T-cell (primary cell): ENCODE measurements at regions of chr5 and their contacts with region 1.

Region 1: DNA sequence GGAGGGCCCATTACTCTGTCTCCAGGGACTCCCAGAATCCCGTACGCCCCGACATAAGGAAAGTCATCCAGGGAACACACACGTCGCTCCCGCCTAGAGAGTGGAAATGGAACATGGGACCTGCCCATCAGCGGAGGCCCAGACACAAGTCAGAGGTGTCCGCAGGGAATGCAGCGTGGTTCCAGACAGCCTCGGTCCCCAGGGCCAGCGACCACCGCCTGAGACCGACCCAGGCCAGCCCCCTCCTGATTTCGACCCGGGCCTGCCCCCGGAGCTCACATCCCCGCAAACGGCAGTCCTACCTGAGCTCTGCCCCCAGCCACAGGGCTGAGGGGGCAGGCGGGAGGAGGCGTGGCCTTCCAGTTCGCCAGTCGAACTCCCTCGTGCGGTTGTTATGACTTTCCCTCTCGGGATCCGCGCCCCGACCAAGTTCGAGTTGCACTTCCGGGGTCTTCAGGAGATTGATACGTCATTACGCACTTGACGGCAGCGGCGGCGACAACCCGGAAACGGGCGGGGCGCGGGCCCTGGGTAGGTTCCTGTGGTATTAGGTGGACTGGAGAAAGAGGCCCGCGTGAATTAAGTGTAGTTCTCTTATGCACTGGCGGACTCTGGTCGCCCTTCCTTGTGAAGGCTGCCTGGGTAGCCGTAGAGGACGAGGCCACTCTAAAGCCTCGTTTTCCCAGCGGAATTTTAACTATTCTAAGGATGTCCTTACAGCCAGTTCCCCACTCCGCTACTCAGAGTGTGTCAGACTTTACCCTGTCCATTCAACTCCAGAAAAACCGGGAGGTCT is 370.0 kb upstream of the POU5F2 start:
- DNase-seq: peak; percentile 80 to 94 (median 91)
- ATAC-seq: peak; percentile 94 to 98 (median 97)
- H3K4me3 ChIP-seq: peak overlapping the region; percentile 67 to 95
- H3K4me3 Mint-ChIP-seq: peak overlapping the region; percentile 91 to 96 (median 93)
- H3K27ac ChIP-seq: peak overlapping the region; percentile 70
- H3K27ac Mint-ChIP-seq: peak overlapping the region; percentile 91 to 93
- H3K4me1 ChIP-seq: peaks cover 8 to 14% of the 10 kb centered on the region in 2 experiments
- H3K4me1 Mint-ChIP-seq: peaks cover 45 to 49% (median 49%) of the 10 kb centered on the region in 3 donors
- H3K27me3 ChIP-seq: peaks cover 0 to 2% of the 10 kb centered on the region in 2 experiments
- H3K27me3 Mint-ChIP-seq: peaks cover 0 to 7% of the 10 kb centered on the region in 2 donors

Region 2: GRCh38 chr5:92421937-92422336 is 1689.5 kb before region 1 on chr5:
- CTCF ChIA-PET with region 1: no interaction called
- POLR2A ChIA-PET with region 1: no interaction called
- DNase-seq: no peak
- ATAC-seq: no peak
- H3K4me3 ChIP-seq: no peak overlapping the region
- H3K4me3 Mint-ChIP-seq: no peak overlapping the region
- H3K27ac ChIP-seq: no peak overlapping the region
- H3K27ac Mint-ChIP-seq: no peak overlapping the region
- H3K4me1 ChIP-seq: no peaks in the 10 kb centered on the region
- H3K4me1 Mint-ChIP-seq: no peaks in the 10 kb centered on the region
- H3K27me3 ChIP-seq: no peaks in the 10 kb centered on the region
- H3K27me3 Mint-ChIP-seq: no peaks in the 10 kb centered on the region

Region 3: DNA sequence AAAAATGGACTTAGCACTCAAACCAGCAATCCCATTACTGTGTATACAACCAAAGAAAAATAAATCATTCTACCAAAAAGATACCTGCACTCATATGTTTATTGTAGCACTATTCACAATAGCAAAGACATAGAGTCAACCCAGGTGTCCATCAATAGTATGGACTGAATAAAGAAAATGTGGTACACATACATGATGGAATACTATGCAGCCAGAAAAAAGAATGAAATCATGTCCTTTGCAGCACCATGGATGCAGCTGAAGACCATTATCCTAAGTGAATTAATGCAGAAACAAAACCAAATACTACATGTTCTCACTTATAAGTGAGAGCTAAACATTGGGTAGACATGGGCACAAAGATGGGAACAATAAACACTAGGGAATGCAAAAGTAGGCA is 133.2 kb before region 1 on chr5:
- CTCF ChIA-PET with region 1: no interaction called
- POLR2A ChIA-PET with region 1: interaction called in 1 of 2 experiments, 13 read pairs
- DNase-seq: no peak
- ATAC-seq: no peak
- H3K4me3 ChIP-seq: no peak overlapping the region
- H3K4me3 Mint-ChIP-seq: no peak overlapping the region
- H3K27ac ChIP-seq: no peak overlapping the region
- H3K27ac Mint-ChIP-seq: no peak overlapping the region
- H3K4me1 ChIP-seq: no peaks in the 10 kb centered on the region
- H3K4me1 Mint-ChIP-seq: peaks cover 2 to 10% (median 6%) of the 10 kb centered on the region in 3 donors
- H3K27me3 ChIP-seq: no peaks in the 10 kb centered on the region
- H3K27me3 Mint-ChIP-seq: no peaks in the 10 kb centered on the region

Region 4: GRCh38 chr5:94157704-94158539 is 46.5 kb after region 1 on chr5:
- CTCF ChIA-PET with region 1: no interaction called
- POLR2A ChIA-PET with region 1: no interaction called
- DNase-seq: no peak
- ATAC-seq: no peak
- H3K4me3 ChIP-seq: no peak overlapping the region
- H3K4me3 Mint-ChIP-seq: no peak overlapping the region
- H3K27ac ChIP-seq: no peak overlapping the region
- H3K27ac Mint-ChIP-seq: no peak overlapping the region
- H3K4me1 ChIP-seq: no peaks in the 10 kb centered on the region
- H3K4me1 Mint-ChIP-seq: no peaks in the 10 kb centered on the region
- H3K27me3 ChIP-seq: no peaks in the 10 kb centered on the region
- H3K27me3 Mint-ChIP-seq: no peaks in the 10 kb centered on the region

Region 5: GRCh38 chr5:94433454-94434149 is 322.2 kb after region 1 on chr5:
- CTCF ChIA-PET with region 1: no interaction called
- POLR2A ChIA-PET with region 1: no interaction called
- DNase-seq: no peak
- ATAC-seq: no peak
- H3K4me3 ChIP-seq: no peak overlapping the region
- H3K4me3 Mint-ChIP-seq: no peak overlapping the region
- H3K27ac ChIP-seq: no peak overlapping the region
- H3K27ac Mint-ChIP-seq: no peak overlapping the region
- H3K4me1 ChIP-seq: no peaks in the 10 kb centered on the region
- H3K4me1 Mint-ChIP-seq: no peaks in the 10 kb centered on the region
- H3K27me3 ChIP-seq: no peaks in the 10 kb centered on the region
- H3K27me3 Mint-ChIP-seq: no peaks in the 10 kb centered on the region